ENCODE measurements at regions of chr11 and their contacts with region 1.

Region 1: GRCh38 chr11:59822989-59823566 is 12.5 kb upstream of the MRPL16 start:
- DNase-seq: no peak
- ATAC-seq: peak; percentile 75
- H3K4me3 Mint-ChIP-seq: no peak overlapping the region
- H3K27ac Mint-ChIP-seq: no peak overlapping the region
- H3K4me1 Mint-ChIP-seq: peaks cover 12% of the 10 kb centered on the region
- H3K27me3 Mint-ChIP-seq: no peaks in the 10 kb centered on the region
- CTCF ChIP-seq: peak; percentile 23

Region 2: DNA sequence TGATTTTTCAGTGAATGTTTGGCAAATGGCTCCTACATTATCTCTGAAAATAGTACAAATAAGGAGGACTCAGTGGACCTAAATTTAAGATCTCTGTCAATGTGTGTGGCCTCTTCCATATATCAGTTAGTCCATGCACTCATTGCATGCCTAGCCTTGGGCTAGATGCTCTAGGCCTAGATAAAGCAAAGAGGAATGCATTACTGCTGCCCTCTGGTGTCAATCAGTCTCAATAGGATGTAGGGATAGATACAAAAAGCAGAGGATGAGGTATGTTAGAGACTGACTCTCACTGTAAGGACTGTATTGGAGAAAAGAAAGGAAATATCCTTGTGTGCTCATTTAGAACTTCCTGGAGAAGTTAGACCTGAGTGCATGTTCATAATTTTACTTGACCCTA is 307.4 kb after region 1 on chr11:
- CTCF ChIA-PET with region 1: interaction called, 3 read pairs
- POLR2A ChIA-PET with region 1: no interaction called
- intact Hi-C with region 1: loop called (anchors 1 kb)
- DNase-seq: no peak
- ATAC-seq: peak; percentile 47
- H3K4me3 Mint-ChIP-seq: no peak overlapping the region
- H3K27ac Mint-ChIP-seq: no peak overlapping the region
- H3K4me1 Mint-ChIP-seq: peaks cover 9% of the 10 kb centered on the region
- H3K27me3 Mint-ChIP-seq: peaks cover 3% of the 10 kb centered on the region
- CTCF ChIP-seq: no peak

Region 3: GRCh38 chr11:60184824-60185511 is 361.9 kb after region 1 on chr11:
- CTCF ChIA-PET with region 1: no interaction called
- POLR2A ChIA-PET with region 1: no interaction called
- intact Hi-C with region 1: loop called (anchors 10 kb)
- DNase-seq: no peak
- ATAC-seq: peak; percentile 84
- H3K4me3 Mint-ChIP-seq: peak overlapping the region; percentile 7
- H3K27ac Mint-ChIP-seq: peak overlapping the region; percentile 54
- H3K4me1 Mint-ChIP-seq: peaks cover 54% of the 10 kb centered on the region
- H3K27me3 Mint-ChIP-seq: no peaks in the 10 kb centered on the region
- CTCF ChIP-seq: no peak

Region 4: GRCh38 chr11:60251485-60252212 is 428.6 kb after region 1 on chr11:
- CTCF ChIA-PET with region 1: no interaction called
- POLR2A ChIA-PET with region 1: no interaction called
- intact Hi-C with region 1: loop called (anchors 1 kb)
- DNase-seq: no peak
- ATAC-seq: no peak
- H3K4me3 Mint-ChIP-seq: no peak overlapping the region
- H3K27ac Mint-ChIP-seq: no peak overlapping the region
- H3K4me1 Mint-ChIP-seq: peaks cover 3% of the 10 kb centered on the region
- H3K27me3 Mint-ChIP-seq: peaks cover 6% of the 10 kb centered on the region
- CTCF ChIP-seq: no peak

Measured in activated B cell treated with CpG ODN at 0.5 μM for 24 hours (primary cell).